ENCODE measurements at regions of chr17 and their contacts with region 1.

Region 1: GRCh38 chr17:63919311-63919723 is 678 bp upstream of the GH1 start:
- DNase-seq: peak; percentile 83

Region 2: DNA sequence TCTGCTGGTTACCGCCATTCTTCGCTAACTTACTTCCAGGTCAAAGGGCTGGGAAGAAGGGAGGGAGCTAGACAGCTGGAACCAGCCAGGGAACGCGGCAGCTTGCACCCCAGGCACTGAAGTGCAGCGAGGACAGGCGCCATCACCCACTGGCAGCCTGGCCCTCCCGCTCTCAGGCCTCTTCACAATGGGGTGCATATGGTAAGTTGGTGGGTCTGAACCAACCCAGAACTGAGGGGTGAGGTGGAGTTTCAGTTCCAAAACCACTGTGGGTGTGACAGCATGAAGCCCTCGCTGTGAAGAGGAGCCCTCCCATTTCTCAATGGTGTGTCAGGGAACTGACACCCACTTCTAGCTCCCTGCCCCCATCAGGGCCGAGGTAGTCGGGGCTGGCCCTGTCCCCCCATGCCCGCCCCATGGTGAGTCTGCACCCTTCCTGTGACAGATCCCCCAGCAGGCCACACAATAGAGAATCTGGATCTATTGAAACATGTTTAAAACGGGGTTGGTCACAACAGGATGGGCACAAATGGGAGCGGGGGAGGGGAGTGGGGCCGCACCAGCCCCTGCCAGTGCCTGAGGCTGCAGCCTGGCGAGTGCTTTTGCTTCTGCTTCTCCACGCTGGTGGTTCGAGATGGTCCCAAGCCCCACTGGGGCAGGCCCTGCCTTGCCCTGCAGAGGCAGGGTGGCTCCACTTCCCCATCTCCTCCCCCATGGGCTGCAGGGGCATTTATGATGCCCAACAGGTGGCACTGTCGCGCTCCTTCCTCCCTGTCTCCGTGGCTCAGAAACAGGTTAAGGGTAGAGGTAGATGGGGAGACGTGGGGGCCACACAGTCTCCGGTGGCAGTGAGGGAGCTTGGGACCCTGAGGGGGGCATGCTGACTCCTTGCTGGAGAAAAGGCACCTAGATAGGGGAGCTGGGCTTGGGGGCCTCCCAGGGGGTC is 221.7 kb before region 1 on chr17:
- in situ Hi-C with region 1: no loop called
- DNase-seq: peak; percentile 96

Region 3: GRCh38 chr17:64281962-64282727 is 362.8 kb after region 1 on chr17:
- in situ Hi-C with region 1: loop called (anchors 25 kb)
- DNase-seq: peak; percentile 78